A549 (cell line): ENCODE measurements at regions of chr1 and their contacts with region 1.

Region 1: DNA sequence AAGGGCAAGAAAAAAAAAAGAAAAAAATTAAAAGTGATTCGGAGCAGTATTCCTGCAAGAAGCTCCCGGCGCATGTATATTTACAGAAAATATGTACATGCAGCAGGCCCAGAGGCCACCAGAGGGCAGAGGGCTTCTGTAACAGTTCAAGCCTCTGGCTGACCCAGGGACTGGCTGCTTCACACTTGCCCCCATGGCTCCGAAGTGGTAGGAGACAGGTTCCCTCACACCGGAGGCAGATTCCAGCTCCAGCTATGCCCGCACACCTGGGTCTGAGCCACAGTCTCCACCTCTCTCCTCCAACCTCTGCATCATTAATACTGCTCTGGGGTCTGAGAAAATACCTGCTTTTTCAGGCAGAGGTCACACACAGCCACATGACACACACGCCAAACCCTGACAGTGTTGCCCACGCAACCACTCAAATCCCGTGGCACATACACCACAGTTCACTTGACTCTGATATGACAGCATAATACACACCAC is 2.2 kb upstream of the ARHGAP30 start:
- DNase-seq: peak; percentile 70 to 72
- ATAC-seq: peak; percentile 77 to 83
- H3K4me3 ChIP-seq: no peak overlapping the region
- H3K27ac ChIP-seq: peak overlapping the region in 1 of 2 experiments; percentile 51; a peak in 2 of 6 replicates
- H3K4me1 ChIP-seq: peaks cover 27% of the 10 kb centered on the region
- CTCF ChIP-seq: peak; percentile 75
- EP300 ChIP-seq: no peak
- POLR2A ChIP-seq: no peak
- RAD21 ChIP-seq: peak; percentile 73 to 81

Region 2: DNA sequence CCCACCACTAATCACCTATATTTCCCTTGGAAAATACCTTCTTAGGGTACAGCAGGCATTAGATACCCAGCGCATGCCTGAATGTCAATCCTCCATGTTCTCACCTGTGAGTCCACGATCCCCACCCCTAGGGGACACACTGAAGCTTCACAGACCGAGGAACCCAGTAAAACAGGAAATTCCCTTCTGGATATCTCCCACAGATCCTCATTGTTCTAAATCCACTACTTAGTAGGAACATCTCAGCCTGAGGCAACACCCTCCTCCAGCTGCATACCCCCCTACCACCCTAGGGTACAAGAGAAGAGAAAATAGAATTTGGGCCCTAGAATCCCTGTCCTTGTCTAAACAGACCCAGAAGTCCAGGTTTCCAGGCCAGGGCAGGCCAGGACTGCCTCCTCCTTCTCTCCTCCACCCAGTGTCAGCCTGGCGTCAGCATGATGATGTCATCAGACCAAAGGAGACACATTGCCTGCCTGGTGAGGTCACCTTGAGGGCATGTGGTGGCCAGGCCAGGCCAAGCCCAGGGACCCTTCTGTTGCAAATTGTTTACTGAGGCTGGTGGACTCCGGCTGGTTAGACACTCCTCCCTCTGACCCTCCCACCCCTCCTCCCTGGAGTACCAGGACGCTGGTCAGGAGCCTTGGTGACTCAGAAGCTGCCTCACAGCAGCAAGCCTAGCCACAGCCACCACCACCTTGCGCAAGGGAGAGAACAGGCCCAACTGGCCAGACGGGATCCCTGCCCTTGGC is 11.2 kb after region 1 on chr1:
- CTCF ChIA-PET with region 1: interaction called, 74 read pairs
- POLR2A ChIA-PET with region 1: interaction called, 3 read pairs
- DNase-seq: peak; percentile 69 to 91
- ATAC-seq: peak; percentile 90 to 91
- H3K4me3 ChIP-seq: no peak overlapping the region
- H3K27ac ChIP-seq: peak overlapping the region; percentile 88
- H3K4me1 ChIP-seq: peaks cover 56% of the 10 kb centered on the region
- CTCF ChIP-seq: no peak
- EP300 ChIP-seq: peak in 1 of 2 experiments; percentile 12; a peak in 1 of 5 replicates
- POLR2A ChIP-seq: peak; percentile 16; the same call in 1 of the 2 replicates
- RAD21 ChIP-seq: peak in 1 of 2 experiments; percentile 35; a peak in 2 of 5 replicates

Region 3: DNA sequence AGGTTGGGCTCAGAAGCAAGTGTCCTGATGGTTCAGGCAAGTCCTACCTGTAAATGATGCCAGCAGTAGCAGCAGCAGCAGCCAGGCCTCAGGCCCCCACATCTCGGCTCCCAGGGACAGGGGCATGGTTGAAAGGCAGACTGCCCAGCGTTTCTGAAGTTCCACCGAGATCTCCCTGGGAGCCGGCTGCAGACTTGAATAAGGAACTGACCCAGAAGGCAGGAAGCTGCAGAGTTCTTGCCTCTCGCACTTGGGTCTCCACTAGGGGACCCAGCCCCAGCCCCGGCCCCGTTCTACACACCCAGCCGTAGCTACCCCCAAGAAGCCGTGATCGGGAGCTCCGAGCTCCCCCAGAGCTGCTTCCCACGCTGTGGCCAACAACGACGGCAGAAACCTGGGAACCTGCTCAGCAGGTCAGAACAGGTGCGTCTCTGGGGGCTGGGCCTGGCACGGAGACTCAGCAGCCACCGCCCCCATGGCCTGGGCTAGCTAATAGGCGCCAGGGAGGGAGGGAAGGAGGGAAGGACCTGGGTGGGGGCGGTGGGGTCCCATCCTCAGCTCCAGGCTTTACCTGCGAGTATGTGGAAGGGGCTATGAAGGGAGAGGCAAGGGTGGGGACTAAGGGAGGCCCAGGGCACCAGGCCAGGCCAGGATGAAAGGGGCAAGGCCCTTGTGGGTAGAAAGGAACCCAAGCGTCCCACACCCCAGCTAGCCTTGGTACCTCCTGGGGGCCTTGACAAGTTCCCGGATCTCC is 17.4 kb after region 1 on chr1 and contains the start of gene NECTIN4:
- CTCF ChIA-PET with region 1: interaction called, 319 read pairs
- POLR2A ChIA-PET with region 1: interaction called, 3 read pairs
- DNase-seq: no peak
- ATAC-seq: no peak
- H3K4me3 ChIP-seq: no peak within 1 kb of the TSS
- H3K27ac ChIP-seq: peak within 1 kb of the TSS; percentile 62 to 78
- H3K4me1 ChIP-seq: peaks cover 51% of the 10 kb centered on the region
- CTCF ChIP-seq: no peak
- EP300 ChIP-seq: no peak
- POLR2A ChIP-seq: no peak
- RAD21 ChIP-seq: no peak
- polyA plus RNA-seq, gene NECTIN4: 3.1 and 4.3 TPM in 2 replicates

Region 4: GRCh38 chr1:161139765-161140164 is 67.8 kb after region 1 on chr1:
- CTCF ChIA-PET with region 1: interaction called, 12 read pairs
- POLR2A ChIA-PET with region 1: interaction called, 4 read pairs
- DNase-seq: peak; percentile 35 to 44
- ATAC-seq: peak in 1 of 2 experiments; percentile 66; a peak in 3 of 6 replicates
- H3K4me3 ChIP-seq: no peak overlapping the region
- H3K27ac ChIP-seq: no peak overlapping the region
- H3K4me1 ChIP-seq: no peaks in the 10 kb centered on the region; the same call in 2 of the 3 replicates
- CTCF ChIP-seq: peak; percentile 53
- EP300 ChIP-seq: no peak
- POLR2A ChIP-seq: no peak
- RAD21 ChIP-seq: peak; percentile 56 to 62

Region 5: DNA sequence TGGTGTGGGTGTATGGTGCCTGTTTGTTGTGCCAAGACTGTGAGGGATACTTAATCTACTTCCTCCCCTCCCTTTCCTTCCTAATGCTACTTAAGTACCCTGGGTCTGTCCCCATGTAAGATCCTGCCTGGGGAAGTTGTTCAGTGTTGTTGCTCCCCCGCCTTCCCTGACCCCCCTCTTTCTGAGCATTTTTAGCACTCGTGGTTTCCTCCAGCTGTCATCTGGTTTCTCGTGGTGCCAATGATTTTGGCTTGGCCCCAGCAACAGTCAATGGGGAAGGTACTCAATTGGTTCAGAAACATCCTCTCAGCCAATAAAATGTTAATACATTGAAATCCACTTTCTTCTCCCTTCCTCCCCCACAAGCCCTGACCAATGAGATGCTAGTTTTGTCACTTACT is 113.4 kb after region 1 on chr1:
- CTCF ChIA-PET with region 1: no interaction called
- POLR2A ChIA-PET with region 1: no interaction called
- DNase-seq: no peak
- ATAC-seq: no peak
- H3K4me3 ChIP-seq: no peak overlapping the region
- H3K27ac ChIP-seq: no peak overlapping the region
- H3K4me1 ChIP-seq: peaks cover 12% of the 10 kb centered on the region
- CTCF ChIP-seq: no peak
- EP300 ChIP-seq: no peak
- POLR2A ChIP-seq: no peak
- RAD21 ChIP-seq: no peak